Heart right ventricle (tissue), 16 donors: ENCODE measurements at regions of chr9 and their contacts with region 1.

Region 1: GRCh38 chr9:127916665-127917613 is at the start of gene ST6GALNAC4:
- DNase-seq: peak; percentile 94 to 96
- ATAC-seq: peak; percentile 91 to 97 (median 94)
- H3K4me3 ChIP-seq: peak within 1 kb of the TSS; percentile 64 to 96 (median 76)
- H3K27ac ChIP-seq: peak within 1 kb of the TSS in 9 of 10 donors; percentile 40 to 79 (median 77)
- H3K4me1 ChIP-seq: peaks cover 10 to 61% (median 49%) of the 10 kb centered on the region in 9 donors
- H3K27me3 ChIP-seq: peaks cover 0 to 3% (median 0%) of the 10 kb centered on the region in 7 donors
- CTCF ChIP-seq: no peak
- total RNA-seq, gene ST6GALNAC4: 23.2 to 52.9 (median 33.9) TPM

Region 2: GRCh38 chr9:127214421-127215267 is 702.3 kb before region 1 on chr9:
- intact Hi-C with region 1: loop called in 1 of 10 experiments (anchors 10 kb)
- DNase-seq: peak in 1 of 2 donors; percentile 52
- ATAC-seq: peak in 6 of 8 donors; percentile 9 to 61 (median 46)
- H3K4me3 ChIP-seq: no peak overlapping the region
- H3K27ac ChIP-seq: no peak overlapping the region
- H3K4me1 ChIP-seq: peaks cover 0 to 11% (median 0%) of the 10 kb centered on the region in 9 donors
- H3K27me3 ChIP-seq: no peaks in the 10 kb centered on the region
- CTCF ChIP-seq: peak; percentile 56 to 80 (median 76)

Region 3: GRCh38 chr9:127734747-127735529 is 182.0 kb before region 1 on chr9 and contains the start of gene TOR2A:
- intact Hi-C with region 1: loop called (anchors 1 to 5 kb)
- DNase-seq: peak; percentile 98 to 99
- ATAC-seq: peak; percentile 94 to 97 (median 95)
- H3K4me3 ChIP-seq: peak within 1 kb of the TSS; percentile 46 to 95 (median 78)
- H3K27ac ChIP-seq: peak within 1 kb of the TSS; percentile 90 to 99 (median 97)
- H3K4me1 ChIP-seq: peaks cover 10 to 35% (median 19%) of the 10 kb centered on the region in 9 donors
- H3K27me3 ChIP-seq: no peaks in the 10 kb centered on the region
- CTCF ChIP-seq: peak; percentile 90 to 99 (median 95)
- total RNA-seq, gene TOR2A: 1.5 to 6.3 (median 2.2) TPM

Region 4: DNA sequence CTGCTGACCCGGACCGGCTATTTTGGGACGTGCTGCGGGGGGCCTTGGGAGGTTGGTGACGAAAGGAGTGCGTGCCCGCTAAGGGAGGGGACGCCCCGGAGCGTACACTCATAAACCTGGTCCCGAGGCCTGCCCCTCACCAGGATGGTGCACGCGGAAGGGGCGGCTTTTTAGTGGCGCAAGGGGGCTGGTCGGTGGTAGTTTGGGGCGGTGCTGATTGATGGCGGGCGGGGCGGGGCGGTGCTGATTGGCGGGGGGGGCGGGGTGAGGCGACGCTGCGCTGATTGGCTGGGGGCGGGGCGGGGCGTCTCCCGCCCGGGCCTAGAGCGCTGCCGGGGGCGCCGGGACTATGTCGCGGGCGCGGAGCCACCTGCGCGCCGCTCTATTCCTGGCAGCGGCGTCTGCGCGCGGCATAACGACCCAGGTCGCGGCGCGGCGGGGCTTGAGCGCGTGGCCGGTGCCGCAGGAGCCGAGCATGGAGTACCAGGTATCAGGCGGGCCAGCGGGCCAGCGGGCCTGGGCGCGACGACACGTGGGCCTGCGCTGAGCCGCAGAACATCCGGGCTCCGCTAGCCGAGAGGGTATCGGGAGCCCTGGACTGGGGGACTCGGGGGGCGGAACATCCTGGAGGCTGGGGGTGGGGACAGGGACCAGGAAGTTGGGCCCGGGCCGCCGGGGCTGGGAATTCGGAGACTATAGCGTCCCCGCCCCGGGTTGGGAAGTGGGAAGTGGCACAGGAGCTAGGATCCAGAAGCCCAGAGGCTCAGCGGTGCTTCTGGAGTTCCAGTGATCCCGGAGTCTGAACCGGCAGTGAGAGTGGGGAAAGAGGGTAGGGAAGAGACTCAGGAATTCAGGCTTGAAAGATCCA is 114.1 kb before region 1 on chr9 and contains the start of gene FPGS:
- intact Hi-C with region 1: loop called in 2 of 10 experiments (anchors 5 to 10 kb)
- DNase-seq: peak; percentile 88 to 91
- ATAC-seq: peak; percentile 91 to 96 (median 94)
- H3K4me3 ChIP-seq: peak within 1 kb of the TSS; percentile 53 to 79 (median 70)
- H3K27ac ChIP-seq: peak within 1 kb of the TSS; percentile 81 to 98 (median 93)
- H3K4me1 ChIP-seq: peaks cover 8 to 38% (median 22%) of the 10 kb centered on the region in 9 donors
- H3K27me3 ChIP-seq: no peaks in the 10 kb centered on the region
- CTCF ChIP-seq: no peak
- total RNA-seq, gene FPGS: 40.2 to 58.5 (median 46.5) TPM

Region 5: GRCh38 chr9:127877566-127877998 is 39.4 kb before region 1 on chr9 and contains the start of gene AK1:
- intact Hi-C with region 1: loop called in 4 of 10 experiments (anchors 5 kb)
- DNase-seq: peak; percentile 85 to 86
- ATAC-seq: peak; percentile 70 to 86 (median 78)
- H3K4me3 ChIP-seq: peak within 1 kb of the TSS; percentile 50 to 81 (median 69)
- H3K27ac ChIP-seq: peak within 1 kb of the TSS; percentile 61 to 93 (median 88)
- H3K4me1 ChIP-seq: peaks cover 18 to 66% (median 50%) of the 10 kb centered on the region in 9 donors
- H3K27me3 ChIP-seq: peaks cover 0 to 12% (median 0%) of the 10 kb centered on the region in 7 donors
- CTCF ChIP-seq: no peak
- total RNA-seq, gene AK1: 553 to 918 (median 731) TPM

Region 6: GRCh38 chr9:128081056-128081455 is 164.1 kb after region 1 on chr9:
- intact Hi-C with region 1: no loop called
- DNase-seq: peak in 1 of 2 donors; percentile 51
- ATAC-seq: peak; percentile 61 to 87 (median 68)
- H3K4me3 ChIP-seq: no peak overlapping the region
- H3K27ac ChIP-seq: peak overlapping the region in 9 of 10 donors; percentile 9 to 60 (median 50)
- H3K4me1 ChIP-seq: peaks cover 0 to 58% (median 29%) of the 10 kb centered on the region in 9 donors
- H3K27me3 ChIP-seq: no peaks in the 10 kb centered on the region
- CTCF ChIP-seq: no peak